Upper lobe of right lung (tissue), 1 donor: ENCODE measurements at regions of chr14 and their contacts with region 1.

Region 1: DNA sequence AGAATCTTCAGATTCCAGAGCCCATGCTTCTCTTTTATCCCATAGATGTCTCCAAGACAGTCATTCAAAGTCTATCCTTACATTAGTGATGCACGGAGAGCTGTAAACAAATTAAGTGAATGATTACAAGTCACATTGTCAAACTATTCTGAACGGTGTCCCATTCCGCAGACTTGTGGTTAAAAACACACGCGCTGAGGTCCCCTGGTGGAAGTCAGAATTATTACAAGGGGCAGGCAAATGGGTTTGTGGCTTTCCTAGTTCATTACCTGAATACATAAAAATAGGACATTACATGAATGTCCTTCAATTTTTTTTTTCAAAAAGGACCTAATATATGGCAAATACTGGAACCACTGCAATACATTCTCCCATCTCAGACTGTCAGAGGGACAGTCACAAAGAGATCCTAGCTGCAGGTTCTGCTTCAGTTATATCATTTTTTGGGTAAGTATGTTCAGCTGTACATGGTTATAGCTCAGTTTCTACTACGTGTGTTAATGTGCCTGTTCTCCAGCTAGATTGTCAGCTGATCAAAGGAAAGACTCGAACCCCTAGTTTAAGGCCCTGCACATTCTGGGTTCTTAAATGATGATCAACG is 53.1 kb upstream of the STON2 start:
- DNase-seq: no peak
- ATAC-seq: peak; percentile 83
- H3K4me3 ChIP-seq: no peak overlapping the region
- H3K27ac ChIP-seq: no peak overlapping the region
- H3K4me1 ChIP-seq: peaks cover 12% of the 10 kb centered on the region
- H3K27me3 ChIP-seq: no peaks in the 10 kb centered on the region
- CTCF ChIP-seq: peak; percentile 89

Region 2: GRCh38 chr14:81276073-81277069 is 176.9 kb before region 1 on chr14:
- intact Hi-C with region 1: loop called (anchors 10 kb)
- DNase-seq: no peak
- ATAC-seq: no peak
- H3K4me3 ChIP-seq: no peak overlapping the region
- H3K27ac ChIP-seq: no peak overlapping the region
- H3K4me1 ChIP-seq: no peaks in the 10 kb centered on the region
- H3K27me3 ChIP-seq: no peaks in the 10 kb centered on the region
- CTCF ChIP-seq: no peak

Region 3: GRCh38 chr14:81331229-81332021 is 121.8 kb before region 1 on chr14:
- intact Hi-C with region 1: no loop called
- DNase-seq: no peak
- ATAC-seq: no peak
- H3K4me3 ChIP-seq: no peak overlapping the region
- H3K27ac ChIP-seq: no peak overlapping the region
- H3K4me1 ChIP-seq: no peaks in the 10 kb centered on the region
- H3K27me3 ChIP-seq: no peaks in the 10 kb centered on the region
- CTCF ChIP-seq: no peak